AG04449 (cell line): ENCODE measurements at regions of chr10 and their contacts with region 1.

Region 1: GRCh38 chr10:71957546-71958275 is 6.5 kb upstream of the CHST3 start:
- DNase-seq: no peak
- H3K4me3 ChIP-seq: no peak overlapping the region
- CTCF ChIP-seq: no peak

Region 2: DNA sequence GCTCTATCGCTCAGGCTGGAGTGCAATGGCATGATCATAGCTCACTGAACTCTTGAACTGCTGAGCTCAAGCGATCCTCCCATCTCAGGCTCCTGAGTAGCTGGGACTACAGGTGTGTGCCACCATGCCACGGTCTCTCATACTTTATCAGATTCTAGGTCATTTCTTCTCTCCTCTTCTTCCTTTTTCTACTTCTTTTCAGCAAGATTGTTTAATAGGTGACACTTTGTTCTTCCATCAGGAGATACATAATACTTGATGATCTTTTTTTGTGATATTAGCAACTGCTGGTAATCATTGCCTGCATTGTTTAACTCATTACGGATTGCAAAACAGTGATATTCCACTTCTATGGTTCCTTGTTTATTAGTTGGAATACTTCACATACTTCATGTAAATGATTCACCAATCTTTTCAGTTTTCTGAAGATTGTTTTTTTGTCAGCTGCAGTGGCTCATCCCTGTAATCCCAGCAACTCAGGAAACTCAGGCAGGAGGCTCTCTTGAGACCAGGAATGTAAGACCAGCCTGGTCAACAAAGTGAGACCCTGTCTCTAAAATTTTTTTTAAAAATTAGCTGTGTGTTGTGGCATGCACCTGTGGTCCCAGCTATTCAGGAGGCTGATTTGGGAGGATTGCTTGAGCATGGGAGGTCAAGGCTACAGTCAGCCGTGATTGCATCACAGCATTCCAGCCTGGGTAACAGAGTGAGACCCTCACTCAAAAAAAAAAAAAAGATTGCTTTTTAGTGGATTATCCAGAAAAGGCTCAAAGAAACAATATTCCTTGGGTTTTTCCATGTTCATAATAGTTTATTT is 29.7 kb before region 1 on chr10:
- CTCF ChIA-PET with region 1: interaction called, 10 read pairs
- POLR2A ChIA-PET with region 1: no interaction called
- DNase-seq: peak; percentile 12
- H3K4me3 ChIP-seq: no peak overlapping the region
- CTCF ChIP-seq: no peak

Region 3: DNA sequence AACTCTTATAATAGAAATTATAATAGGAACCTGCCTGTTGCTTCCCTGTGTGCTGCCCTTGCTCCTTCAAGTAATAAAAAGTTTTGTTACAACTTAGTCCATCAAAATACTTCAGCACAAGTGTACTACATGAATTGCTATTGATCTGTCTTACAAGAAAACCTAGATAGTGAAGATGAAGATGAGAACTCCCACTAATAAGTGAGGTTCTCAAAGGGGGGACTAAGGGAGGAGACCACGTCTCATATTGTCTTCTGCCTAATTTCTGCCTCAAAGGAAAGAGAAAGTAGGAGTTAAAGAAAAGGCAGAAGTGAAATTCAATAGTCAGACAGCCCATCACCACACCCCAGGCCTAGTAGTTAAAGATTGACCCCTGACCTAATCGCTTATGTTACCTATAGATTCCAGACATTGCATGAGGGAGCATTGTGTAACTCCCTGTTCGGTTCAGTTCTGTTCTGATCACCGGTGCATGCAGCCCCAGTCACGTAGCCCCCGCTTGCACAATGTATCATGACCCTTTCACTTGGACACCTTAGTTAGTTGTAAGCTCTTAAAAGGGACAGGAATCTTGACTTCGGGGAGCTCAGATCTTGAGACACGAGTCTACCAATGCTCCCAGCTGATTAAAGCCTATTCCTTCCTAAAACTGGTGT is 11.8 kb before region 1 on chr10:
- CTCF ChIA-PET with region 1: interaction called, 13 read pairs
- POLR2A ChIA-PET with region 1: no interaction called
- DNase-seq: no peak
- H3K4me3 ChIP-seq: no peak overlapping the region
- CTCF ChIP-seq: no peak

Region 4: DNA sequence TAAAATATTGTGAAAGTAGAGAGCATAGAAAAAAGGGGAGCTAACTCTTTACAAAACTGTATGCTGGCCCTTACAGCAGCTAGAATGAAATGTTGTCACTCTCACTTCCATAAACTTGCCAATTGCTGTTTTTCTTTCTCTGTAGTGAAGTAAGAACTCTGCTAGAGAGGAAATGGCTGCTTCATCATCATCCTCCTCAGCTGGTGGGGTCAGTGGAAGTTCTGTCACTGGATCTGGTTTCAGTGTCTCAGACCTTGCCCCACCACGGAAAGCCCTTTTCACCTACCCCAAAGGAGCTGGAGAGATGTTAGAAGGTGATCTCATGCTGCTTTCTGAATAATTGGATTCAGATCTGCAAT is 266.0 kb after region 1 on chr10:
- CTCF ChIA-PET with region 1: interaction called, 19 read pairs
- POLR2A ChIA-PET with region 1: no interaction called
- DNase-seq: no peak
- H3K4me3 ChIP-seq: no peak overlapping the region
- CTCF ChIP-seq: no peak